HepG2 (cell line): ENCODE measurements at regions of chr4 and their contacts with region 1.

Region 1: GRCh38 chr4:35793045-35793722 is 451.1 kb downstream of the ARAP2 start:
- DNase-seq: no peak
- ATAC-seq: no peak
- H3K4me3 ChIP-seq: no peak overlapping the region
- H3K27ac ChIP-seq: no peak overlapping the region
- H3K4me1 ChIP-seq: no peaks in the 10 kb centered on the region
- H3K27me3 ChIP-seq: no peaks in the 10 kb centered on the region
- CTCF ChIP-seq: no peak
- EP300 ChIP-seq: no peak
- POLR2A ChIP-seq: no peak
- RAD21 ChIP-seq: no peak

Region 2: GRCh38 chr4:35835893-35836292 is 42.7 kb after region 1 on chr4:
- CTCF ChIA-PET with region 1: no interaction called
- POLR2A ChIA-PET with region 1: no interaction called
- in situ Hi-C with region 1: no loop called
- intact Hi-C with region 1: loop called (anchors 1 kb)
- DNase-seq: no peak
- ATAC-seq: no peak
- H3K4me3 ChIP-seq: no peak overlapping the region
- H3K27ac ChIP-seq: no peak overlapping the region
- H3K4me1 ChIP-seq: no peaks in the 10 kb centered on the region
- H3K27me3 ChIP-seq: no peaks in the 10 kb centered on the region
- CTCF ChIP-seq: no peak
- EP300 ChIP-seq: no peak
- POLR2A ChIP-seq: no peak
- RAD21 ChIP-seq: no peak